ENCODE measurements at regions of chr10 and their contacts with region 1.

Region 1: GRCh38 chr10:31353574-31353973 is 34.6 kb downstream of the ZEB1 start:
- DNase-seq: no peak
- ATAC-seq: peak; percentile 76 to 91
- H3K4me3 ChIP-seq: no peak overlapping the region
- H3K27ac ChIP-seq: peak overlapping the region; percentile 57 to 74 (median 70)
- H3K4me1 ChIP-seq: peaks cover 67 to 76% of the 10 kb centered on the region in 2 donors
- H3K27me3 ChIP-seq: no peaks in the 10 kb centered on the region
- CTCF ChIP-seq: peak in 1 of 5 experiments; percentile 18
- POLR2A ChIP-seq: no peak

Region 2: DNA sequence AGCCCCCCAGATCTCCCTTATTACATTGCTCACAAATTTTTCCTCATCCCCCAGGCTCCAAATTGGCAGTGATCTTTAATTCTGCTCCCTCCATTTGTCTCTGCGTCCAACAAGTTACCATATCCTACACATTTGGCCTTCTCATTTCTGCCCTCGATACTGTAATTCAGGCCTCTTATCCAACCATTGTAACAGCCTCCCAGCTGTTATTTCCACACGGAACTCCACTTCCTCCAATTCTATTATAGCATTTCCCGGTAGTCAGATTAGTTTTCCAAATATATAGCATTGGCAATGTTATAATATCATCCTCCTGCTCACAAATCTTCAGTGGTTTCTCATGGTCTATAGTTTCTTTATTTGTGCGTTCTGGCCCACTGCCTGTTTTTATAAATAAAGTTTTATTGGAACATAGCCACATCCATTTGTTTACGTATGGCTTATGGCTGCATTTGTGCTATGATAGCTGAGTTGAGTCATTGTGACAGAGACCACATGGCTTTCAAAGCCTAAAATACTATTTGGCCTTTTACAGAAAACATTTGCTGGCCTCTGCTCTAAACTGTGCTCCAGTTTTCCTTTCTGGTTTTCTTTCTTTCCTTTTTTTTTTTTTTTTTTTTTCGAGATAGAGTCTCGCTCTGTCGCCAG is 195.4 kb before region 1 on chr10:
- in situ Hi-C with region 1: no loop called
- intact Hi-C with region 1: no loop called
- DNase-seq: no peak
- ATAC-seq: peak in 1 of 2 donors; percentile 36
- H3K4me3 ChIP-seq: peak overlapping the region; percentile 24 to 42 (median 30)
- H3K27ac ChIP-seq: peak overlapping the region; percentile 55 to 74 (median 69)
- H3K4me1 ChIP-seq: peaks cover 12 to 18% of the 10 kb centered on the region in 2 donors
- H3K27me3 ChIP-seq: no peaks in the 10 kb centered on the region
- CTCF ChIP-seq: no peak
- POLR2A ChIP-seq: no peak

Region 3: DNA sequence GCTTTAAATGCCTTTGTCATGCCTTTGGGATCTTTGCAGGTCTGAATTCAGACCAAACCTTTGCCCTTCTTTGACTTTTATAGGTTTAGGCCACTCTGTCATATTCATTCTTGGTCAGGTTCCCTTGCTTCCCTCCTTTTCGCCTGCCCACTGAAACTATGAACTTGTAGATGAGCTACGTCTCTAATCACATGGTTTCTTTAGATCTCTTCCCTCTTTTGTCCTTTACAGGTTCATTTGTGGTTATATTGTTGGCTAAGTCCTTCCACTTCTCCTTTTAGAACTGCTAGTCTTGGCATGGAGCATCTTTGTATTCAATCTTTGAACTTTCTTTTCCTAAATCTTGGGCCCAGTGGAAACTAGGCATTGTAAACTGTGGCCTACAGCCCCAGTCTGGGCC is 138.5 kb before region 1 on chr10:
- in situ Hi-C with region 1: no loop called
- intact Hi-C with region 1: no loop called
- DNase-seq: no peak
- ATAC-seq: no peak
- H3K4me3 ChIP-seq: no peak overlapping the region
- H3K27ac ChIP-seq: no peak overlapping the region
- H3K4me1 ChIP-seq: peaks cover 2 to 4% of the 10 kb centered on the region in 2 donors
- H3K27me3 ChIP-seq: no peaks in the 10 kb centered on the region
- CTCF ChIP-seq: no peak
- POLR2A ChIP-seq: no peak

Region 4: DNA sequence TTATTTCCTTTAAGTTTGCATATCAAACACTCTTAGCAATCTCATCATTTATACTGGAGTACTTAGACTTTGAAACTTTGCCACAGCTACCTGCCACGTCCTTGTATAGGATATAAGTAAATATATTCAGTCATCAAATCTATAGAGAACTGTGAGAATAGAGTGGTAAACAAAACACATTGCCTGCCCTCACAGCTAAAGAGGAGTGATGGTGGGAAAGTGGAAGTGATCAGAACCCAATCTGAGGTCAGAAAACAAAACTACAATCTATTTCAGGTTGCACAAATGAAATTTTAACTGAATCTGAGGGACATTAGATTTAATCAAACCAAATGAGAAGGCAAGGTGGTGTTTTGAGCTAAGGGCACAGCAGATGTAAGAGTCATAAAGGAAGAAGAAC is 40.3 kb after region 1 on chr10:
- in situ Hi-C with region 1: no loop called
- intact Hi-C with region 1: loop called (anchors 5 kb)
- DNase-seq: no peak
- ATAC-seq: no peak
- H3K4me3 ChIP-seq: no peak overlapping the region
- H3K27ac ChIP-seq: peak overlapping the region; percentile 81 to 92 (median 90)
- H3K4me1 ChIP-seq: peaks cover 73% of the 10 kb centered on the region in 2 donors
- H3K27me3 ChIP-seq: no peaks in the 10 kb centered on the region
- CTCF ChIP-seq: no peak
- POLR2A ChIP-seq: no peak